ENCODE measurements at regions of chr7 and their contacts with region 1.

Region 1: DNA sequence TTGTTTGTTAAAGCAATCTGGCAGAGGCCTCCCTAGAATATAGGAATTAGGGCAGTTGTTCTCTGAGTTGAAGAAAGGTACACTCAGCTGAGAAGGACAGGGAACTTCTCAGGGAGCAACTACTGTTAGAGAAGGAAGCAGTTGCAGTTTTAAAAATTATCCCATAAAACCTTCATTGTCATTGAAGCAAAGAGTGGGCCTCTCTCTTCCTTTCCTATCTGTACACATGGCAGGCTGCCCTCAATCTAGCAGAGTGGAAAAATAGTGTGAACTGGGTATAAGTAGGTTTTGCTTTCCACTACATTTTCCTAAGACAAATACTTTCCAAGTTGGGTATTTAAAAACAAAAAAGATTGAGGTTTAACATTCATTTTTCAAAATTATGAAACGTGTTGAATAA is 236.7 kb upstream of the KLF14 start:
- DNase-seq: no peak
- H3K4me3 ChIP-seq: no peak overlapping the region
- CTCF ChIP-seq: no peak
- POLR2A ChIP-seq: no peak

Region 2: GRCh38 chr7:129423700-129424618 is 1546.7 kb before region 1 on chr7:
- intact Hi-C with region 1: loop called (anchors 5 kb)
- DNase-seq: no peak
- H3K4me3 ChIP-seq: no peak overlapping the region
- CTCF ChIP-seq: no peak
- POLR2A ChIP-seq: no peak

Region 3: GRCh38 chr7:130595986-130596385 is 374.7 kb before region 1 on chr7:
- intact Hi-C with region 1: no loop called
- DNase-seq: no peak
- H3K4me3 ChIP-seq: no peak overlapping the region
- CTCF ChIP-seq: no peak
- POLR2A ChIP-seq: no peak